Right ventricle myocardium superior (tissue), 1 donor: ENCODE measurements at regions of chr17 and their contacts with region 1.

Region 1: GRCh38 chr17:69414408-69415274 is at the start of gene MAP2K6:
- DNase-seq: peak; percentile 92
- ATAC-seq: peak; percentile 99
- total RNA-seq, gene MAP2K6: 2.8 TPM

Region 2: DNA sequence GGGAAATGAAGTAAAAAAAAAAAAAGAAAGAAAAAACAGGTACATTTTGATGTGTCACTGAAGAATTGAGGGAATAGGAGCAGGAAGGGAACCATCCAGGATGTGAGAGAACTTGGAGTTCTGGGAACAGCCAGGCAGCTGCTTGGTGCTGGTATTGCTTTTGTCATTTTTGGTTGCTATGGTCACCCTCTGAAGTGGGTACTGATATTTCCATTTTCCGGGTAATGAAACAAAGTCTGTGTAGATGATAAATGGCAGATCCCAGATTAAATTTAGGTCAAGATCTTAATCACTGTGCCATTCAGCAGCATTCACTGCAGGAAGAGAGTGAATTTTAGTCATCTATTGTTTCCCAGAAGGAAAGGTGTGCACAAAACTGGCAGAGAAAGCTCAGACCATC is 553.0 kb before region 1 on chr17:
- intact Hi-C with region 1: no loop called
- DNase-seq: no peak
- ATAC-seq: peak; percentile 76

Region 3: GRCh38 chr17:69287168-69287567 is 127.5 kb before region 1 on chr17:
- intact Hi-C with region 1: no loop called
- DNase-seq: no peak
- ATAC-seq: no peak

Region 4: DNA sequence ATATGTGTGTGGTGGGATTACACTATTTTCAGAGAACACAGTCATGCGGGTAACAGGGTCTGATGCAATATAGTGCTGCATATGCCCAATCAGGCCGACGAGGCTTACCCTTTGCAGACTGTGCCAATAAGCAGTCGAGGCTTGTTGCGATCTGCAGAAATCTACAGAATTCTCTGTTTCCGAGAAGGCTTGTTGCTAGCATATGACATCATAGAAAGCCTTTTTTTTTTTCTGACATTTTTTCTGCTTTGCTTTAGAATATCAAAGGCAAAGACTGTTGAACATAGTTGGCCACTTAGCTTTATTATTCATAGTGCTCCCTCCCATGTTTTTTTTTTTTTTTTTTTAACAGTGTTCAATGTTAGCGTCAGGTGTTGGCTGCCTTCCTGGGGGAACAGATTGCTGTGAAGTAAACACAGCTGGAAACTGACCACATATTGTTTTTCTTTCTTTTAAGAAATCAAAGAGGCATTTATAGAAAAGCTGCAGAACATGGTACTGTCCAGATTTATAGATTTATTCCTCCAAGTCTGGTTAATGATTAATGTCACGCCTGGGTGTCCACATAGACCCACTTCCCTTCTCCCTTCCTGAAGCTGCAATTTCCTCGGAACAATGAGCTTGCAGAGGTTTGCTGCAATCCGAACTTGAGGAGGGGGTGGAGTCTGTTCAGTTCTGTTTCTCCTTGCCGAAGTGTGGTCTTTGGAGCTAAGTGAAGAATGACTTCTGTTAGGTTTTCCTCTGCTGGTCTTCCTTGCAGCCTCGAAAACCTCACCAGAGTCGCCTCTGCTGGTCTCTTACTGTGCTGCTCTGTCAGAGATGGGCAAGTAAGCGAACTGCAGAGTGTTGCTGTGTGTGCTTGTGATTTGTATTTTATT is 87.2 kb after region 1 on chr17:
- intact Hi-C with region 1: loop called (anchors 10 kb)
- DNase-seq: no peak
- ATAC-seq: peak; percentile 78